ENCODE measurements at regions of chr17 and their contacts with region 1.

Region 1: GRCh38 chr17:32877164-32877764 is 340 bp upstream of the MYO1D start:
- DNase-seq: peak; percentile 86
- H3K4me3 Mint-ChIP-seq: peak overlapping the region; percentile 77
- H3K27ac Mint-ChIP-seq: peak overlapping the region; percentile 52
- H3K4me1 Mint-ChIP-seq: peaks cover 17% of the 10 kb centered on the region
- H3K27me3 Mint-ChIP-seq: no peaks in the 10 kb centered on the region
- CTCF ChIP-seq: peak; percentile 93

Region 2: DNA sequence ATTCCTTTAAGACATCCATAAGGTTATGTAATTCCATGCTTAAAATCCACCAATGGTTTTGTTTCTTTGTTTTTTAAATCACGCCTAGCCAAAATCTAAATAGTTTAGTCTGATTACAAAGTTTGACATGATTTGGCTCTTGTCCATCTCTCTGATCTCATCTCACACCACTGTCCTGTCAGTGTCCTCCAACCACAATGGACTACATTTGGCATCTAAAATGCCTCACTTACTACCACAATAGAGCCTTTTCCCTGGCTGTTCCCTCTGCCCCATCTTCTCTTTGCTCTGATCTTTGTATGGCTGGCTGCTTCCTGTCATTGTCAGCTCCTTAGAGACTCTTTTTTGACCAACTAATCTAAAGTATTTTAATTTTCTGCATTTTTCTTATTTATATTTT is 157.6 kb before region 1 on chr17:
- CTCF ChIA-PET with region 1: no interaction called
- POLR2A ChIA-PET with region 1: no interaction called
- intact Hi-C with region 1: no loop called
- DNase-seq: no peak
- H3K4me3 Mint-ChIP-seq: no peak overlapping the region
- H3K27ac Mint-ChIP-seq: no peak overlapping the region
- H3K4me1 Mint-ChIP-seq: no peaks in the 10 kb centered on the region
- H3K27me3 Mint-ChIP-seq: no peaks in the 10 kb centered on the region
- CTCF ChIP-seq: no peak

Region 3: DNA sequence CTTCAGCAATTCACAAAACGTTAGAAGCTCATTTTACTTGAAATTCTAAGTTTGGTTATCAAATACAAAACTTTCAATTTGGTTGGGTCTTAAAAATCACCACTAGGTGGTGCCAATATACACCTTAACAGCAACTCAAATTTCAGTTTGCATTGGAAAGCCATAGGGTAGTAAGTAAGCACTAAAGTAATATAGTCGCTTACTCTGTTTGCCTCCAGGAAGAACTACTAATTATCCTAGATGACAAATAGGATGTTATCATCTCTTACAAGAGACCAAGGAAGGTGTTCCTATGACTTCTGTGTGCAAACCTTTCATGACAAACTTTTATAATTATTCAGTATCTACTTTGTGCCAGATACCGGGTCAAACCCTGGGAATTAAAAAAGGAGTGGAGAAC is 93.7 kb before region 1 on chr17:
- CTCF ChIA-PET with region 1: interaction called, 213 read pairs
- POLR2A ChIA-PET with region 1: interaction called, 36 read pairs
- intact Hi-C with region 1: loop called (anchors 1 kb)
- DNase-seq: peak; percentile 53
- H3K4me3 Mint-ChIP-seq: no peak overlapping the region
- H3K27ac Mint-ChIP-seq: peak overlapping the region; percentile 73
- H3K4me1 Mint-ChIP-seq: peaks cover 5% of the 10 kb centered on the region
- H3K27me3 Mint-ChIP-seq: no peaks in the 10 kb centered on the region
- CTCF ChIP-seq: peak; percentile 63

Region 4: GRCh38 chr17:32813021-32813420 is 64.2 kb before region 1 on chr17:
- CTCF ChIA-PET with region 1: interaction called, 13 read pairs
- POLR2A ChIA-PET with region 1: no interaction called
- intact Hi-C with region 1: no loop called
- DNase-seq: peak; percentile 38
- H3K4me3 Mint-ChIP-seq: no peak overlapping the region
- H3K27ac Mint-ChIP-seq: peak overlapping the region; percentile 50
- H3K4me1 Mint-ChIP-seq: peaks cover 16% of the 10 kb centered on the region
- H3K27me3 Mint-ChIP-seq: no peaks in the 10 kb centered on the region
- CTCF ChIP-seq: no peak

Region 5: GRCh38 chr17:32847977-32848376 is 29.3 kb before region 1 on chr17:
- CTCF ChIA-PET with region 1: interaction called, 15 read pairs
- POLR2A ChIA-PET with region 1: interaction called, 3 read pairs
- intact Hi-C with region 1: no loop called
- DNase-seq: no peak
- H3K4me3 Mint-ChIP-seq: no peak overlapping the region
- H3K27ac Mint-ChIP-seq: no peak overlapping the region
- H3K4me1 Mint-ChIP-seq: peaks cover 3% of the 10 kb centered on the region
- H3K27me3 Mint-ChIP-seq: no peaks in the 10 kb centered on the region
- CTCF ChIP-seq: no peak

Region 6: DNA sequence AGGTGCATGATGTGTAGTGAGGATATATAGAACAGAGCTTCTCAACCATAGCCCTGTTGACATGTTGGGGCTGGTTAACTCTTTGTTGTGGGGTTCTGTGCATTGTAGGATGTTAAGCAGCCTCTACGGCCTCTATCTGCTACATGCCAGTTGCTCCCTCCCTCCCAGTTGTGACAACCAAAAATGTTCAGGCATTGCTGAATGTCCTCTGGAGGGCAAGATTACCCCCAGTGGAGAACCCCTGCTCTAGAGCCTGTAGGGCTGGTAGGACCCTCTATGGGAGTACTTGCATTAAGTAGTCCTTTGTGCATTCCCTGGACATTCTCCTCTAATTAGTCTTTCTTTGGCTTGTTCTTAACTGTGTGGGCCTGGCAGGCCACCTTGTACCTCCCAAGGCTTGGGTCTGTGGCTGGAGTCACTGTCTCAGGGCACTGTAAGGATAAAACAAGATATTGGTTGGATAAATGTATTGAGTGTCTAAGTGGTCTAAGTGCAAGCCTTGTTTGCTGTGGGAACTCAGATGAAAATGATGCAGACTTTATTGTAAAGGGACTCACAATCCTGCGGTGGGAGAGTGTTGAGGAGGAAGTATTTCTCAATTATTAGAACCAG is 19.5 kb after region 1 on chr17:
- CTCF ChIA-PET with region 1: interaction called, 16 read pairs
- POLR2A ChIA-PET with region 1: interaction called, 5 read pairs
- intact Hi-C with region 1: no loop called
- DNase-seq: no peak
- H3K4me3 Mint-ChIP-seq: no peak overlapping the region
- H3K27ac Mint-ChIP-seq: no peak overlapping the region
- H3K4me1 Mint-ChIP-seq: peaks cover 7% of the 10 kb centered on the region
- H3K27me3 Mint-ChIP-seq: no peaks in the 10 kb centered on the region
- CTCF ChIP-seq: no peak

Region 7: GRCh38 chr17:32936894-32937500 is 59.7 kb after region 1 on chr17:
- CTCF ChIA-PET with region 1: interaction called, 10 read pairs
- POLR2A ChIA-PET with region 1: no interaction called
- intact Hi-C with region 1: no loop called
- DNase-seq: peak; percentile 58
- H3K4me3 Mint-ChIP-seq: no peak overlapping the region
- H3K27ac Mint-ChIP-seq: no peak overlapping the region
- H3K4me1 Mint-ChIP-seq: peaks cover 6% of the 10 kb centered on the region
- H3K27me3 Mint-ChIP-seq: no peaks in the 10 kb centered on the region
- CTCF ChIP-seq: peak; percentile 79

Measured in MCF 10A (cell line).